Breast epithelium (tissue), 4 donors: ENCODE measurements at regions of chr16 and their contacts with region 1.

Region 1: DNA sequence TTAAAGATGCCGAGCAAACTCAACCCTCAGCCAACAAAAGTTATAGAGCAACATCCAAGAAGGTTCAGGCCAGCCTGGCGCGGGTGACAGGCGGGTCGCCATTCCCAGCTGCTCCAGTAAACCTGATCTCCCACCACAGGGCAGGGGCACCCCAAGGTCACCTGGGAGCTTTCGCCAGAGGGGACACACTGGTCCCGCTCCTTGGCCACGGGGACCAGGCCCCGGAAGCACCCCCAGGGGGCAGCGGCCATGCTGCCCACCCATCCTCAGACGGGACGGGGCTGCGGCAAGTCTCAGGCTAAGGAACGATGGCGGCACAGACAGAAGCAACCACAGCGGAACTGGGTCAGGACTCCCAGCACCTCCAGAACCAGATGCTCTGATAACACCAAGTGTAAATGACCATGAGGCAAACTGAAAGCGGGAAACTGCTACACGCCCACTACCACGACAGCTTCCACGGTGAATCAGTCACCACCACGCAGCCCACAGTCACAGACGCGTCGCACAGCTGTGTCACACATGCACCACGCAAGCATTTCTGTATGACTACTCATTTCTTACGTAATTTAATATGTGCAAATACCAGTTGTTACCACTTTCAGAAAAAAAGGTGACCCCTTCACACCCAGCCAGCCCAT is 14.1 kb upstream of the CCDC154 start:
- DNase-seq: no peak
- H3K4me3 ChIP-seq: no peak overlapping the region
- H3K27ac ChIP-seq: no peak overlapping the region
- H3K4me1 ChIP-seq: no peaks in the 10 kb centered on the region
- H3K27me3 ChIP-seq: no peaks in the 10 kb centered on the region
- CTCF ChIP-seq: no peak
- POLR2A ChIP-seq: no peak

Region 2: DNA sequence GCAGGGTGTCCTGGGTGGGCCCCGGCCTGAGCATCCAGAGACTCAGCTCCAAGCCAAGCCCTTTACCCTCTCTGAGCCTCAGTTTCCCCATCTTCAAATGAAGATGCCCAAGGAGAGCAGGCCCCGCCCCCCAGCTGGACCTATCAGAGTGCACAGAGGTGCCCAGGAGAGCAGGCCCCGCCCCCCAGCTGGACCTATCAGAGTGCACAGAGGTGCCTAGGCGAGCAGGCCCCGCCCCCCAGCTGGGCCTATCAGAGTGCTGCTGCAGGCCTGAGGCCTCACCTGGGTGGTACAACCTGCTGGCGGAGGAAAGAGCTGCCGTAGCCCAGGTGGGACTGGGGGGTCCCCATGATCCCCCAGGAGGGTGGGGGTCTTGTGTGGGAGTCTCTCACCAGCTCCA is 389.3 kb before region 1 on chr16:
- intact Hi-C with region 1: loop called (anchors 10 kb)
- DNase-seq: no peak
- H3K4me3 ChIP-seq: no peak overlapping the region
- H3K27ac ChIP-seq: no peak overlapping the region
- H3K4me1 ChIP-seq: no peaks in the 10 kb centered on the region
- H3K27me3 ChIP-seq: peaks cover 2 to 100% of the 10 kb centered on the region in 2 donors
- CTCF ChIP-seq: no peak
- POLR2A ChIP-seq: no peak

Region 3: DNA sequence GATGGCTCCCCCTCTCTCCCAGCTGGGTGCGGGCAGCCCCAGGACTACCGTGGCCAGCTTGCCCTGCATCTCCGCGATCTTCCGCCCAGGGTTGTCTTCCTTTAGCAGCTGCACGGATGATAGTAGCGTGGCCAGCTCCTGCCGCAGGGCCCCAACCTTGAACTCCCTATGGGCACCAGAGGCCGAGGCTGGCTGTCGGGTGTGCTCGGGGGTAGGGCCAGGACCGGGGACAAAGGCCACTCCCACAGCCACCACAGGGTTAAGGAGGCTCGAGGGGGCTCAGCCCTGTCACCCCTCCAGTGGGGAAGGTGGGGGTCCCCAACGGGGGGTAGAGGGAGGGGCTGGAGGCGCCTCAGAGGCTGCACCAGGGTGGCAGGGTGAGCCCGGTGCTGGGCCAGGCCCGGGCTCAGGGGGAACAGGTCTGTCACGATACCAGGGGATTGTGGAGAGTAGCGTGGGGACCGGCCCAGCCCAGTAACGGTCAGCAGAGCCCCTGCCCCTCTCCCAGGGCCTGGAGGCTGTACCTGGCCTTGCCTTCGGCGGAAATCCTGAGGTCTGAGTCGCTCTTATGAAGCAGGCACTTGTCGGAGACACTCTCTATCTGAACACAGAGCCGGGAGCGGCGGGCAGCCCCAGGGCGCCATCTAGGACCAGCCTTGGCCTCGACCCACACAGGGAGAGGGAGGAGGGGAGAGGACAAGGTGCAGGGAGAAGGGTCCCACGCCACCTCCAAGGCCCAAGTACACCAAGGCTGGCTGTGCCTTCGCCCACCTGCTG is 22.3 kb before region 1 on chr16:
- intact Hi-C with region 1: loop called (anchors 1 kb)
- DNase-seq: no peak
- H3K4me3 ChIP-seq: no peak overlapping the region
- H3K27ac ChIP-seq: no peak overlapping the region
- H3K4me1 ChIP-seq: no peaks in the 10 kb centered on the region
- H3K27me3 ChIP-seq: no peaks in the 10 kb centered on the region
- CTCF ChIP-seq: no peak
- POLR2A ChIP-seq: no peak